IMR-90 (cell line): ENCODE measurements at regions of chr11 and their contacts with region 1.

Region 1: DNA sequence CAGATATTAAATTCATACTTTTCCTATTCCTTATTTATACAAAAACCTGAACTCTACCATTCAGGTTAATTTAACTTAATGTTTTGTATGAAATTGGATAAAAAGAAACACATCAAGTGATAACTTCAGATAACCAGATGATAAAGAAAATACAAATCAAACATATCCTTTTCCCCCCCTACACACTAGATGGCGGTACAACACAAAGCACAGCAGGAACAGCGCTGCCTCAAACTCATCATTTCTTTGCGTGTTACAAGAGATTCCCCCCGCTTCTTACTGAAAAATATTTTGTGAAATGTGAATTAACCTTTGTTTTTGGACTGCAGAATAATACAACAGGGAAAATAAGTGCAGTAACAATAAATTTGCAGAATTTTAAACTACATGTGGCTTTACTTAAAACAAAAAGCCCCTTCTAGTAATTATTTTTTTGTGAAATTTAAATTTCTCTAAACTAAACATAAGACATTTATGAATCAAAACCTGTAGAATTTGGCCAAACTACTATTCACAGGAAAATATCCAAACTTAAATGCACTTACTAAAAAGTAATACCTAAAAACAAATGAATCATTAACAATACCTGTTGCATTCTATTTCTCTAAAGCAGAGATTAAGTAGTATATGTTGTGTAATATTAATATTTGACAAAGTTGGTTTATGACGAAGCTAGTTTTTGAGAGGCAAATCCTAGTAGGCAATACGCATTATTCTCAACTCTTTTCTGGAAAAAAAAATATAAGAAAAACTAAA is 74.4 kb downstream of the ARHGAP32 start:
- DNase-seq: peak; percentile 82
- ATAC-seq: peak; percentile 54
- H3K4me3 ChIP-seq: no peak overlapping the region
- H3K27ac ChIP-seq: no peak overlapping the region
- H3K4me1 ChIP-seq: peaks cover 5% of the 10 kb centered on the region; the same call in 1 of the 2 replicates
- H3K27me3 ChIP-seq: no peaks in the 10 kb centered on the region
- CTCF ChIP-seq: peak; percentile 99
- POLR2A ChIP-seq: peak; percentile 45; the same call in 1 of the 2 replicates
- RAD21 ChIP-seq: peak; percentile 100

Region 2: DNA sequence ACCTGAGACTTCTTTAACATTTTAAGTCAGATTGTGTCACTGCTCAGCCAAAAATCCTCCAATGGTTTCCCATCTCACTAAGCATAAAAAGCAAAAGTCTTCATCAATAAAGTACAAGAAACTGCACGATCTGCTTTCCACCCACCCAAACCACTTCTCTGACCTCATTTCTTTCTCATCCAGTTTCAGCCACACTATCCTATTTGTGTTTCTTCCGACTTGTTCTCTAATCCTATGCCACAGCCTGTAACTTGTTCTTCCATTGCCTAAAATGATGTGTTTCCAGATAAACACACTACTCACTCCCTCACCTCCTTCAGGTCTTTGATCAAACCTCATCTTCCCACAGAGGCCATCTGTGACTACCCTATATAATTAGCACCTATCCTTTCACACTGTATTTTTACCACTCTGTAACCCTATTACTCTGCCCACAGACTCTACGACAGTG is 46.0 kb after region 1 on chr11:
- CTCF ChIA-PET with region 1: no interaction called
- POLR2A ChIA-PET with region 1: no interaction called
- dilution Hi-C with region 1: no loop called
- in situ Hi-C with region 1: no loop called
- intact Hi-C with region 1: no loop called
- DNase-seq: peak; percentile 10
- ATAC-seq: no peak
- H3K4me3 ChIP-seq: no peak overlapping the region
- H3K27ac ChIP-seq: no peak overlapping the region
- H3K4me1 ChIP-seq: no peaks in the 10 kb centered on the region
- H3K27me3 ChIP-seq: no peaks in the 10 kb centered on the region
- CTCF ChIP-seq: no peak
- POLR2A ChIP-seq: no peak
- RAD21 ChIP-seq: no peak

Region 3: DNA sequence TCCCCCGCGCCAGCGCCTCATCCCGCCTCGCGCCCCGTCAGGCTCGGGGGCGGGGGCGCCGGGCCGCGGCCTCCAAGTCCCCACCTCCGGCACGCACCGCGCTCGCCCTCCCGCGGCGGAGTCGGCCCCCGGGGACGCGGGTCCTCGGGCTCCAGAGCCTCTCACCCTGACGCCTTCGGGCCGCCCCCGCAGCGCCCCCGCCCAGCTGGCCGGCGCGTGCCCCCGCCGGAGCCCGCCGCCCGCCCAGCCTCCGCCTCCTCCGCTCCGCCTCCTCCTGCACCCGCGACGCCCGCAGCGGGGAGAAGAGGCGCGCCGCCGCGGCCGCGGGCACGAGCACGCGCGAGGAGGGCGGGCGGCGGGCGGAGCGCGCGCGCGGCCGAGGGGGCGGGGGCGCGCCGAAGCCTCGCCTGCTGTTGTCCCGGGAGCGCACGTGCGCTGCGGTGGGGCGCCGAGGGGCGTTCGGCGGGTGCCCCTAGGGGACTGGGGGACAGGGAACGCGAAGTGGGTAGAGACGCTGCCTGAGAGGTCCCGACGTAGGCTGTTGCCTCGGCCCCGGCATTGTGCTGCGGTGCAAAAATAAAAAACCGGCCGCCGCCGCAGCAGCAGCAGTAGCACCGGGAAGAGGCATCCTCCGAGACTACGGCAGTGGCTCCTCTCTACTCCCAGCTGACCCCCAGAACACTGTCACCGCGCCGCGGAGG is 161.7 kb after region 1 on chr11:
- CTCF ChIA-PET with region 1: no interaction called
- POLR2A ChIA-PET with region 1: no interaction called
- dilution Hi-C with region 1: no loop called
- in situ Hi-C with region 1: no loop called
- intact Hi-C with region 1: loop called (anchors 1 kb)
- DNase-seq: peak; percentile 67
- ATAC-seq: peak; percentile 90
- H3K4me3 ChIP-seq: peak overlapping the region; percentile 82
- H3K27ac ChIP-seq: peak overlapping the region; percentile 38; the same call in 1 of the 2 replicates
- H3K4me1 ChIP-seq: peaks cover 2% of the 10 kb centered on the region; the same call in 1 of the 2 replicates
- H3K27me3 ChIP-seq: no peaks in the 10 kb centered on the region
- CTCF ChIP-seq: 0 out of 2 replicates have a peak, but pooled peaks have one; percentile 15
- POLR2A ChIP-seq: no peak
- RAD21 ChIP-seq: no peak

Region 4: DNA sequence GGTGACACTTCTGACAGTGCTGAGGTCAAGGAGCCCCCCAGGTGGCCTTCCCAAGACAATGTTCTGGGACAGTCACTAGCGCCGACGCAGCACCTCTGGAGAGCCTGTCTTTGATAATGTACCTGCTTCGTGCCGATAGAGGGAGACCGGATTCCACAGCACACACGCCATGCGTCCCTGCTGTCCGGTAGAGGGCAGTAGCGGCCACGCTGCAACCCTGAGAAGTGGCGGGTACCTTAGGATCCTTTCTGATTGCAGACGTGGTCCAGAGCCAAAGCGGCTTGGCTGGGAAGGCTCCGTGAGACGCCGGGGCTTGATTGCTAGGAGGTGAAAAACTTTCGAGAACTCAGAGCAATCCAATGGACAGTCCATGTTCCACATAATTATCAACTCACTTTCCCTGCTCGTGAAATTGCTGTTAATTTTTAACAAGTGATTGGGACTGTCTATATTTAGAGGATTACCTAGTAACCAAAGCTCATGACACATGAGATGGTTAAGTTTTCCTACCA is 246.4 kb after region 1 on chr11:
- CTCF ChIA-PET with region 1: interaction called, 3 read pairs
- POLR2A ChIA-PET with region 1: no interaction called
- dilution Hi-C with region 1: no loop called
- in situ Hi-C with region 1: no loop called
- intact Hi-C with region 1: loop called (anchors 1 kb)
- DNase-seq: peak; percentile 82
- ATAC-seq: peak; percentile 100
- H3K4me3 ChIP-seq: no peak overlapping the region
- H3K27ac ChIP-seq: no peak overlapping the region
- H3K4me1 ChIP-seq: no peaks in the 10 kb centered on the region
- H3K27me3 ChIP-seq: peaks cover 9% of the 10 kb centered on the region
- CTCF ChIP-seq: peak; percentile 100
- POLR2A ChIP-seq: peak; percentile 26; the same call in 1 of the 2 replicates
- RAD21 ChIP-seq: peak; percentile 97

Region 5: DNA sequence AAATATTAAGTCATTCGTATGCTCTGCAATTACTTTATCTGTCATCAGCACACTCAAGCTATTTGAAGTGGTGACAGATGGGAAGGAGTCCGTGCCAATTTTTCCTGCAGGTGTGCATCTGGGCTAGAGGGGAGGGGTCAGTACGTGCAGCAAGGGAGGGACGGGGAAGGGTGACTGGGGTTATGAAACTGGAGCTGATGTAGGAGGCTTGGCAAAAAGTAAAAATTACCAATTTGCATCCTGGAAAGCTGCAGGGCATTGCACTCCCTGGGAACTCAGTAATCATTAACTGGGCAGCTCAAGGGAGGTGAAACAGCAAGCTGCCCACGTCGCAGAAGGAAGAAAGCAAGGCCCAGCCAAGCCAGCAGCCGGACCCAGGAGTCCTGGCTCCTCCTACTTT is 610.8 kb after region 1 on chr11:
- CTCF ChIA-PET with region 1: no interaction called
- POLR2A ChIA-PET with region 1: no interaction called
- dilution Hi-C with region 1: no loop called
- in situ Hi-C with region 1: loop called (anchors 25 kb)
- intact Hi-C with region 1: no loop called
- DNase-seq: no peak
- ATAC-seq: no peak
- H3K4me3 ChIP-seq: no peak overlapping the region
- H3K27ac ChIP-seq: no peak overlapping the region
- H3K4me1 ChIP-seq: no peaks in the 10 kb centered on the region
- H3K27me3 ChIP-seq: peaks cover 4% of the 10 kb centered on the region; the same call in 1 of the 2 replicates
- CTCF ChIP-seq: no peak
- POLR2A ChIP-seq: no peak
- RAD21 ChIP-seq: no peak